AG04450 (cell line): ENCODE measurements at regions of chr9 and their contacts with region 1.

Region 1: GRCh38 chr9:98222885-98223640 is 30.6 kb upstream of the CORO2A start:
- DNase-seq: peak; percentile 97
- H3K4me3 ChIP-seq: no peak overlapping the region
- H3K27ac ChIP-seq: peak overlapping the region; percentile 99
- H3K27me3 ChIP-seq: no peaks in the 10 kb centered on the region
- CTCF ChIP-seq: no peak

Region 2: DNA sequence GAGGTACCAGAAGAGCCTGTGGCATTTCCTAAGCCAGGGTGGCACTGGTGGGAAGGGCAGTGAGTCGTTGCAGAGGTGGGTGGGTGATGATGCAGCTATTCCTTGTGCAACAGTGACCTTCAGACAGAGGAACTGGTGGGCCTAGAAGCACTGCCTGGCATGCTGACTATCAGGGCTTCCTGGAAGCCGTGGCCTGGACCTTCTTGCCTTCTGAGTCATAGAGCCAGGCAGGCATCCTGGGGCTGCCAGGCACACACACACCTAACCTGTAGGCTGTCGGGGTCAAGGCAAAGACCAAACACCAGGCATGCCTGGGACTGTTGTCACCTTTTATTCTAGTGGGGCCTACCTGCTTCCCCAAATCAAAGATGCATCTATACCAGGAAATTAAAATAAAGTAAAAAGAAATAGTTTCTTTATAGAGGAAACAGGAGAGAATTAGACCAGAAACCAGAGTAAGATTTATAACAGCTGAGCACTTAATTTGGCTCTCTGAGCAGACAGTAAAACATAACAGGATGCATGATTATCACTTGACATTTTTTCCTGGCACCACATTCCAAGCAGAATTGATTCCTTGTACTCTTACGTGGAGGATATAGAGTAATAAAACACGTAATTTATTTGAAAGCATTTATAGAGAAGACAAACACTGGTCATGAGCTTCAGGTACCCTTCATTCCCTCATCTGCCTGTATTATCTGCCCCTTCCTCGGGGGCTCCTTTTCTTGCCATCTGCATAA is 141.4 kb before region 1 on chr9:
- CTCF ChIA-PET with region 1: no interaction called
- POLR2A ChIA-PET with region 1: no interaction called
- DNase-seq: no peak
- H3K4me3 ChIP-seq: no peak overlapping the region
- H3K27ac ChIP-seq: peak overlapping the region; percentile 65
- H3K27me3 ChIP-seq: no peaks in the 10 kb centered on the region
- CTCF ChIP-seq: no peak

Region 3: GRCh38 chr9:98255578-98256296 is 32.7 kb after region 1 on chr9 and contains the start of gene TBC1D2:
- CTCF ChIA-PET with region 1: interaction called, 3 read pairs
- POLR2A ChIA-PET with region 1: interaction called, 23 read pairs
- DNase-seq: peak; percentile 74
- H3K4me3 ChIP-seq: peak within 1 kb of the TSS; percentile 90
- H3K27ac ChIP-seq: peak within 1 kb of the TSS; percentile 90
- H3K27me3 ChIP-seq: no peaks in the 10 kb centered on the region
- CTCF ChIP-seq: 0 out of 2 replicates have a peak, but pooled peaks have one; percentile 24
- polyA plus RNA-seq, gene TBC1D2: 17.2 and 21.9 TPM in 2 replicates